ENCODE measurements at regions of chr17 and their contacts with region 1.

Region 1: GRCh38 chr17:75154195-75155106 is at the start of gene JPT1:
- DNase-seq: peak; percentile 100
- H3K4me3 ChIP-seq: peak within 1 kb of the TSS; percentile 75
- H3K27ac ChIP-seq: peak within 1 kb of the TSS; percentile 78
- H3K4me1 ChIP-seq: peaks cover 24% of the 10 kb centered on the region
- CTCF ChIP-seq: no peak
- total RNA-seq, gene JPT1: 121 and 140 TPM in 2 replicates

Region 2: GRCh38 chr17:75006653-75007052 is 147.8 kb before region 1 on chr17:
- CTCF ChIA-PET with region 1: no interaction called
- POLR2A ChIA-PET with region 1: no interaction called
- intact Hi-C with region 1: no loop called
- DNase-seq: no peak
- H3K4me3 ChIP-seq: no peak overlapping the region
- H3K27ac ChIP-seq: no peak overlapping the region
- H3K4me1 ChIP-seq: peaks cover 4% of the 10 kb centered on the region
- CTCF ChIP-seq: peak; percentile 51; the same call in 1 of the 2 replicates

Region 3: GRCh38 chr17:75131280-75132017 is 23.0 kb before region 1 on chr17 and contains the start of gene NT5C:
- CTCF ChIA-PET with region 1: no interaction called
- POLR2A ChIA-PET with region 1: interaction called, 3 read pairs
- intact Hi-C with region 1: loop called (anchors 1 kb)
- DNase-seq: peak; percentile 95
- H3K4me3 ChIP-seq: peak within 1 kb of the TSS; percentile 89
- H3K27ac ChIP-seq: peak within 1 kb of the TSS; percentile 69
- H3K4me1 ChIP-seq: peaks cover 28% of the 10 kb centered on the region
- CTCF ChIP-seq: peak; percentile 90
- total RNA-seq, gene NT5C: 229 and 259 TPM in 2 replicates

Region 4: DNA sequence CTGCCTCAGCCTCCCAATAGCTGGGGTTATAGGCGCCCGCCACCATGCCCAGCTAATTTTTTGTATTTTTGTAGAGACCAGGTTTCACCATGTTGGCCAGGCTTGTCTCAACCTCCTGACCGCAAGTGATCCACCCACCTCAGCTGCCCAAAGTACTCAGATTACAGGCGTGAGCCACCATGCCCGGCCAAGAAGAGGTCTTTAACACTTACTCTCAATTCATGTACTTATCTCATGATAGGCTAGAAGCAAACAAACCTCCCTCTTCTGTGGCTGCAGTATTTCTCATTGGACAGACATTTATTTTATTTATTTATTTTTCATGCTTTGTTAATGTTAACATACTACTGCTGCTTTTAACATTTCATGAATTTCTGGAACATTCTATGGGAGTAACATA is 15.9 kb before region 1 on chr17:
- CTCF ChIA-PET with region 1: no interaction called
- POLR2A ChIA-PET with region 1: interaction called, 10 read pairs
- intact Hi-C with region 1: no loop called
- DNase-seq: no peak
- H3K4me3 ChIP-seq: no peak overlapping the region
- H3K27ac ChIP-seq: no peak overlapping the region
- H3K4me1 ChIP-seq: peaks cover 12% of the 10 kb centered on the region
- CTCF ChIP-seq: no peak

Region 5: GRCh38 chr17:75173526-75173925 is 19.1 kb after region 1 on chr17:
- CTCF ChIA-PET with region 1: interaction called, 4 read pairs
- POLR2A ChIA-PET with region 1: interaction called, 5 read pairs
- intact Hi-C with region 1: loop called (anchors 2 kb)
- DNase-seq: no peak
- H3K4me3 ChIP-seq: no peak overlapping the region
- H3K27ac ChIP-seq: no peak overlapping the region
- H3K4me1 ChIP-seq: peaks cover 3% of the 10 kb centered on the region
- CTCF ChIP-seq: no peak

Region 6: GRCh38 chr17:75205037-75205792 is 50.8 kb after region 1 on chr17 and contains the start of gene NUP85:
- CTCF ChIA-PET with region 1: no interaction called
- POLR2A ChIA-PET with region 1: interaction called, 3 read pairs
- intact Hi-C with region 1: loop called (anchors 2 kb)
- DNase-seq: peak; percentile 96
- H3K4me3 ChIP-seq: peak within 1 kb of the TSS; percentile 86
- H3K27ac ChIP-seq: peak within 1 kb of the TSS; percentile 72
- H3K4me1 ChIP-seq: peaks cover 19% of the 10 kb centered on the region
- CTCF ChIP-seq: no peak
- total RNA-seq, gene NUP85: 129 and 130 TPM in 2 replicates

Region 7: GRCh38 chr17:75454193-75454592 is 299.7 kb after region 1 on chr17:
- CTCF ChIA-PET with region 1: no interaction called
- POLR2A ChIA-PET with region 1: no interaction called
- intact Hi-C with region 1: no loop called
- DNase-seq: peak; percentile 76
- H3K4me3 ChIP-seq: no peak overlapping the region
- H3K27ac ChIP-seq: peak overlapping the region; percentile 46
- H3K4me1 ChIP-seq: peaks cover 43% of the 10 kb centered on the region
- CTCF ChIP-seq: no peak